Activated CD8-positive, alpha-beta T cell treated with anti-CD3 and anti-CD28 coated beads, Interleukin-2, amount 10 ng/mL, durations not matched to agents 7 days and 5 days (primary cell): ENCODE measurements at regions of chr3 and their contacts with region 1.

Region 1: GRCh38 chr3:108552267-108553159 is 36.7 kb downstream of the CIP2A start:
- DNase-seq: no peak
- ATAC-seq: no peak
- H3K4me3 Mint-ChIP-seq: no peak overlapping the region
- H3K27ac Mint-ChIP-seq: no peak overlapping the region
- H3K4me1 Mint-ChIP-seq: no peaks in the 10 kb centered on the region
- H3K27me3 Mint-ChIP-seq: no peaks in the 10 kb centered on the region

Region 2: GRCh38 chr3:108489771-108490170 is 62.7 kb before region 1 on chr3:
- CTCF ChIA-PET with region 1: interaction called, 32 read pairs
- POLR2A ChIA-PET with region 1: no interaction called
- DNase-seq: peak; percentile 58
- ATAC-seq: peak; percentile 76
- H3K4me3 Mint-ChIP-seq: no peak overlapping the region
- H3K27ac Mint-ChIP-seq: no peak overlapping the region
- H3K4me1 Mint-ChIP-seq: peaks cover 2% of the 10 kb centered on the region
- H3K27me3 Mint-ChIP-seq: peaks cover 9% of the 10 kb centered on the region

Region 3: DNA sequence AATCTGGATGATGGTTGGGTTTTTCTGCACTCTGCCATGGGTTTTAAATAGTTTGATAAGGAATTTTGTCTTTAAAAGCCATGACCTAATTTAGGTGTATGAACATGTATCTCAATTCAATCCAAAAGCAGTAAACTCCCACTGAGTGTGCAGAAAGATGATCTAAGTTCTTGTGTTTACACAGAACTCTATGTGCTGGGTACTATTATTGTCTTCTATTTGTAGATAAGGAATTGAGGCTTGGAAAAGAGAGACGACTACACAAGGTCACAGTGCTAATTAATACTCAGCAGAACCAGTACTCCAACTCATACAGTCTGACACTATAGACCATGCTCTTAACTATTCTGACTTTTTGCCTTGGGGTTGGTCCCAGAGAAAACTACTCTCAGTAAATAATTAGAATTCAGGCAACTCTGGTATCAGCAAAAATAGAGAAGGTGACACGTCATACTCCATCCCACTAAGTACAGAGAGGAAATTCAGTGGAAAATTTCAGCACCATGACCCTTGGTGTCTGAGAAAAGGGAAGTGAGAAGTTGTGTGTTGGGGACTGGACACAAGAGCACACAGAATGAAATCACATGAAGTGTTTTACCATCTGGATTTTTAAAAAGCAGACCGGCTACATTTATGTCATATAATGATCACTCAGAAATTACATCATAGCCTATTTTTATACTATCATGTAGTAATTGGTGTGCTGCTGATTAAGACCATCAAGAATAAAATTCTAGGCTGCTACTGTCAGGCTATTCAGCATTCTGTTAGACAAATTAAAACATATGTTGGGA is 23.9 kb before region 1 on chr3:
- CTCF ChIA-PET with region 1: interaction called, 13 read pairs
- POLR2A ChIA-PET with region 1: no interaction called
- DNase-seq: no peak
- ATAC-seq: no peak
- H3K4me3 Mint-ChIP-seq: no peak overlapping the region
- H3K27ac Mint-ChIP-seq: no peak overlapping the region
- H3K4me1 Mint-ChIP-seq: no peaks in the 10 kb centered on the region
- H3K27me3 Mint-ChIP-seq: peaks cover 28% of the 10 kb centered on the region

Region 4: GRCh38 chr3:108538083-108538482 is 14.4 kb before region 1 on chr3:
- CTCF ChIA-PET with region 1: interaction called, 17 read pairs
- POLR2A ChIA-PET with region 1: no interaction called
- DNase-seq: no peak
- ATAC-seq: no peak
- H3K4me3 Mint-ChIP-seq: no peak overlapping the region
- H3K27ac Mint-ChIP-seq: no peak overlapping the region
- H3K4me1 Mint-ChIP-seq: peaks cover 2% of the 10 kb centered on the region
- H3K27me3 Mint-ChIP-seq: no peaks in the 10 kb centered on the region